Tibial artery (tissue), 4 donors: ENCODE measurements at regions of chr6 and their contacts with region 1.

Region 1: GRCh38 chr6:82247634-82248232 is at the start of gene IBTK:
- DNase-seq: peak; percentile 94 to 97
- H3K4me3 ChIP-seq: peak within 1 kb of the TSS; percentile 88 to 94
- H3K27ac ChIP-seq: peak within 1 kb of the TSS; percentile 90 to 92
- H3K4me1 ChIP-seq: peaks cover 0 to 41% (median 15%) of the 10 kb centered on the region in 4 donors
- H3K27me3 ChIP-seq: no peaks in the 10 kb centered on the region
- CTCF ChIP-seq: peak in 1 of 2 experiments; percentile 15

Region 2: GRCh38 chr6:81562169-81562568 is 685.6 kb before region 1 on chr6:
- intact Hi-C with region 1: loop called (anchors 5 kb)
- DNase-seq: no peak
- H3K4me3 ChIP-seq: peak overlapping the region; percentile 3 to 18
- H3K27ac ChIP-seq: peak overlapping the region; percentile 57 to 64
- H3K4me1 ChIP-seq: peaks cover 0 to 27% (median 4%) of the 10 kb centered on the region in 4 donors
- H3K27me3 ChIP-seq: no peaks in the 10 kb centered on the region
- CTCF ChIP-seq: no peak

Region 3: DNA sequence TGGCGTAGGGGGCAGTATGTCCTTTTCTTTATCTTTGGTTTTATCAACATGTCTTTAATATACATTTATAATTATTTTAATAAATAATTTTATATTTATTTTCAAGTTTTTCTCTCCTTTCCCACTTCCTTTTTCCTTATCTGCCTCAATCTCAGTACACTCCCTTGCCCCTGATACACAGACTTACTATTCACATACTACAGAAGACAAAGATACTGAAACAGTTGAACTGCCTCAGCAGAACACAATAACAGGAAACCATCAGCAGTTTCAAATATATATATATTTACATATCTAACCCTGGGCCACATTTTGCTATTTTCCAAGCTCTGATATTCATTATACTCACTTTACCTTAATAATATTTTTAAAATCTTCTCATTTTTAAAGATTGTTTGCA is 20.0 kb before region 1 on chr6:
- intact Hi-C with region 1: no loop called
- DNase-seq: no peak
- H3K4me3 ChIP-seq: no peak overlapping the region
- H3K27ac ChIP-seq: no peak overlapping the region
- H3K4me1 ChIP-seq: no peaks in the 10 kb centered on the region
- H3K27me3 ChIP-seq: no peaks in the 10 kb centered on the region
- CTCF ChIP-seq: no peak

Region 4: DNA sequence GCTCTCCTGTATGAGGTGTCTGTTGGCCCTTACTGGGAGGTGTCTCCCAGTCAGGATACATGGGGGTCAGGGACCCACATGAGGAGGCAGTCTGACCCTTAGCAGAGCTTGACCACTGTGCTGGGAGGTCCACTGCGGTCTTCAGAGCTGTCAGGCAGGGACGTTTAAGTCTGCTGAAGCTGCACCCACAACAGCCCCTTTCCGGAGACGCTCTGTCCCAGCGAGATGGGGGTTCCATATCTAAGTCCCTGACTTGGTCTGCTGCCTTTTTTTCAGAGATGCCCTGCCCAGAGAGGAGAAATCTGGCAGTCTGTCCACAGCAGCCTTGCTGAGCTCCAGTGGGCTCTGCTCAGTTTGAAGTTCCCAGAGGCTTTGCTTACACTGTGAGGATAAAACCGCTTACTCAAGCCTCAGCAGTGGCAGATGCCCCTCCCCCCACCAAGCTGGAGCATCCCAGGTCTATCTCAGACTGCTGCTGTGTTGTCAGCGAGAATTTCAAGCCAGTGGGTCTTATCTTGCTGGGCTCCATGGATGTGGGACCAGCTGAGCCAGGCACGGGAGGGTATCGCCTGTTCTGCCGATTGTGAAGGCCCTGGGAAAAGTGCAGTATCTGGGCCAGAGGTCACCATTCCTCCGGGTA is 36.2 kb after region 1 on chr6:
- intact Hi-C with region 1: no loop called
- DNase-seq: no peak
- H3K4me3 ChIP-seq: no peak overlapping the region
- H3K27ac ChIP-seq: no peak overlapping the region
- H3K4me1 ChIP-seq: no peaks in the 10 kb centered on the region
- H3K27me3 ChIP-seq: no peaks in the 10 kb centered on the region
- CTCF ChIP-seq: no peak